ENCODE measurements at regions of chr12 and their contacts with region 1.

Region 1: GRCh38 chr12:54005853-54006686 is 2.7 kb upstream of the HOXC8 start:
- DNase-seq: peak; percentile 91
- H3K4me3 Mint-ChIP-seq: peak overlapping the region; percentile 58
- H3K27ac Mint-ChIP-seq: no peak overlapping the region
- H3K4me1 Mint-ChIP-seq: peaks cover 26% of the 10 kb centered on the region
- H3K27me3 Mint-ChIP-seq: peaks cover 90% of the 10 kb centered on the region

Region 2: GRCh38 chr12:54017878-54018467 is 11.9 kb after region 1 on chr12:
- CTCF ChIA-PET with region 1: interaction called, 6 read pairs
- intact Hi-C with region 1: loop called (anchors 1 kb)
- DNase-seq: peak; percentile 79
- H3K4me3 Mint-ChIP-seq: peak overlapping the region; percentile 76
- H3K27ac Mint-ChIP-seq: no peak overlapping the region
- H3K4me1 Mint-ChIP-seq: peaks cover 26% of the 10 kb centered on the region
- H3K27me3 Mint-ChIP-seq: peaks cover 78% of the 10 kb centered on the region

Region 3: GRCh38 chr12:54191550-54192022 is 185.5 kb after region 1 on chr12:
- CTCF ChIA-PET with region 1: interaction called, 72 read pairs
- intact Hi-C with region 1: loop called (anchors 1 kb)
- DNase-seq: peak; percentile 84
- H3K4me3 Mint-ChIP-seq: no peak overlapping the region
- H3K27ac Mint-ChIP-seq: no peak overlapping the region
- H3K4me1 Mint-ChIP-seq: peaks cover 16% of the 10 kb centered on the region
- H3K27me3 Mint-ChIP-seq: peaks cover 35% of the 10 kb centered on the region

Region 4: GRCh38 chr12:54201001-54201794 is 195.1 kb after region 1 on chr12:
- CTCF ChIA-PET with region 1: interaction called, 48 read pairs
- intact Hi-C with region 1: loop called (anchors 1 kb)
- DNase-seq: peak; percentile 75
- H3K4me3 Mint-ChIP-seq: no peak overlapping the region
- H3K27ac Mint-ChIP-seq: no peak overlapping the region
- H3K4me1 Mint-ChIP-seq: no peaks in the 10 kb centered on the region
- H3K27me3 Mint-ChIP-seq: peaks cover 40% of the 10 kb centered on the region

Region 5: DNA sequence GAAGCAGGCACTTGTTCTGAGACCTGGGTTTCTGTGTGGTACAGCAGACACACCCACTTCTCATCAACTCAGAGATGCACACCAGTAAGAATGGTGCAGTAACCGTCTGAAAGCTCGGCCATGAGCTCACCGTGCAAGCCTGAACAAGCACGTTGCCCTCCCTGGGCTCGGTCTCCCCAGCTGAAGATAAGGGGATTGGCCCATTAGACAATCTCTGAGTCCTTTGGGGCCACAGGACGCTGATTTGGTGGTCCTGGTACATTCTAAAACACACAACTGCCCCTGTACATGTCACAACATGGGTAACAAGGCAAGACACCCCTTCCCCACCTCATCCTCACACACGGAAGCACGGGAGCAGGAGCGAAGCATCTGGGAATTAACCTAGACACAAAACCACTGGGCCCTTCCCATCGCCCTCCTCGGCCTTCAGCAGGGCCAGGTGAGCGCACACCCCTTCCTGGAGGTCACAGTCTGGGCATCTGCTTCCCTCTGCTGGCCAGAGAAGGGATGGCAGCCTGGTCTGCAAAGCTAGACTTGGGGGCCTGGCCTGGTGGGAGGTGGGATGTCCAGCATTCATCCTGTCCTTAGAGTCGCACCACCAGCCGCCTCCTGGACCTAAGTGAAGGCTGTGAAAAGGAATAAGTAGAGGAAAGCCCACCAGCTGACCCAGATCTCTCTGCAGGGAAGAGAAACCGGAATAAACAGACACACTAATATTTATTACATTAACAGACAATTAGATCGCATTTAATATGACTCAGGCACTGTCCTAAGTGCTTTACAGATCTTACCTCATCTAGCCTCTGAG is 201.6 kb after region 1 on chr12:
- CTCF ChIA-PET with region 1: interaction called, 48 read pairs
- intact Hi-C with region 1: loop called (anchors 1 kb)
- DNase-seq: peak; percentile 88
- H3K4me3 Mint-ChIP-seq: no peak overlapping the region
- H3K27ac Mint-ChIP-seq: no peak overlapping the region
- H3K4me1 Mint-ChIP-seq: no peaks in the 10 kb centered on the region
- H3K27me3 Mint-ChIP-seq: peaks cover 9% of the 10 kb centered on the region